ENCODE measurements at regions of chr1 and their contacts with region 1.

Region 1: GRCh38 chr1:89632657-89633247 is at the start of gene LRRC8C:
- DNase-seq: peak; percentile 95
- total RNA-seq, gene LRRC8C: 10.5 to 11.9 TPM

Region 2: DNA sequence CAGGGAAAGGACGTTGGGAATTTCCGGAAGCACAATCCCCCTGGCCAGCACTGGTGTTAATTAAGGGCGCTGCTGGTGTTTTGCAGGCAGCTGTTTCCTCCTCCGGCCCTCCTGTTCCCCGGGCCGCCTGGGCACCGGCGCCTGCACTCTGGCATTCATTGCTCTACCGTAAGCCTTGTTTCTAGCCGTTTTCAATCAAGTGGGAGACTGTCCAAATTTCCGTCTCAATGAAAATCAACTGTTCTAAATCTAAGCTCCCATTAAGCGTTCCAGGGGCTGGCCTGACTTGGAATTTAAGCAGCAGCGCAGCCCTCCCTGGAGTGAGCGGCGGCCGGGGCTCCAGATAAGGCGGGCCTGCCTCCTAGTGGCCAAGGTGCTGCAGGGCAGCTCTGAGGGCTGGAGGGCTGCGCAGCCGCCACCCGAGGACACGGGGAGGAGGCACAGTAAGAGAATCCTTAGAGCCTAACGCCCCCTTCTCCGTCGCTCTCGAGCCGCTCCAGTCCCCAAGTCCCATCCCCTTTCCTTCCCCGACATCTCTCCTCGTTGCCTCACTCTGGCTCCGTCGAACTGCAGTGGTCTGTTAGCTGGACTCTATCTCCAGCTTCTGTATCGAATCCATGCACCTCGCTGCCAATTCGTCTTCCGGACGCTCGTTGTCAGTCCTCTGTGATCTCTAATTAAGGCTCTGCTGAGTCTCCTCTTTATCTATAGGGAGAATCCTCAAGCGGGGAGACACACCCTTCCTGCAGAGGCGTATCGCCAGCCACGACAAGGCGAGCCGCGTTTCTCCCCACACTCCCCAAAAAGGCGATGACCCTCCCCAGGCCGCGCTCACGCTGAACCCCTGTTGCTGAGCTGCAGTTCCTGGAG is 130.3 kb after region 1 on chr1:
- intact Hi-C with region 1: loop called (anchors 2 to 10 kb)
- DNase-seq: peak; percentile 96

Region 3: GRCh38 chr1:90989990-90990389 is 1357.2 kb after region 1 on chr1:
- intact Hi-C with region 1: loop called in 1 of 2 experiments (anchors 10 kb)
- DNase-seq: no peak

Measured in posterior vena cava (tissue), 2 donors.